Activated B cell treated with CpG ODN at 0.5 μM for 24 hours (primary cell): ENCODE measurements at regions of chr11 and their contacts with region 1.

Region 1: DNA sequence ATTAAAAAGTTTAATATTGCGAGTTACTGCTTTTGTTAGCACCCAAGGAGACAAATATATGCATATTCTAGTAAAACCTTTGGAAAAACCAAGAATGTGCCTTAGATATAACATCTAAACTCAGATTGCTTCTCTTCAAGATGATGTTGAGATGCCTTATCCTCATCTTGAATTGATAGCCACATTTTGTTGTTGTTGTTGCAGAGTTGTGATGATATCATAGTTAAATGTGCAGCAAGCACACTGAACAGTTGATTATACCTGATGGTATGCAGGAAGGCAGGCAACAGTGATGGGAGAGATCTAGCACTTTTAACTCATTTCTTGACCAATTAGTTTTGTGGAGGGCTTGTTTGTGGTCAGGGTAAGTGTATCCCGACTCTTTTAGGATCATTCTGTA is 48.0 kb downstream of the KDM2A start:
- DNase-seq: no peak
- ATAC-seq: no peak
- H3K4me3 Mint-ChIP-seq: no peak overlapping the region
- H3K27ac Mint-ChIP-seq: no peak overlapping the region
- H3K4me1 Mint-ChIP-seq: peaks cover 40% of the 10 kb centered on the region
- H3K27me3 Mint-ChIP-seq: no peaks in the 10 kb centered on the region
- CTCF ChIP-seq: no peak

Region 2: DNA sequence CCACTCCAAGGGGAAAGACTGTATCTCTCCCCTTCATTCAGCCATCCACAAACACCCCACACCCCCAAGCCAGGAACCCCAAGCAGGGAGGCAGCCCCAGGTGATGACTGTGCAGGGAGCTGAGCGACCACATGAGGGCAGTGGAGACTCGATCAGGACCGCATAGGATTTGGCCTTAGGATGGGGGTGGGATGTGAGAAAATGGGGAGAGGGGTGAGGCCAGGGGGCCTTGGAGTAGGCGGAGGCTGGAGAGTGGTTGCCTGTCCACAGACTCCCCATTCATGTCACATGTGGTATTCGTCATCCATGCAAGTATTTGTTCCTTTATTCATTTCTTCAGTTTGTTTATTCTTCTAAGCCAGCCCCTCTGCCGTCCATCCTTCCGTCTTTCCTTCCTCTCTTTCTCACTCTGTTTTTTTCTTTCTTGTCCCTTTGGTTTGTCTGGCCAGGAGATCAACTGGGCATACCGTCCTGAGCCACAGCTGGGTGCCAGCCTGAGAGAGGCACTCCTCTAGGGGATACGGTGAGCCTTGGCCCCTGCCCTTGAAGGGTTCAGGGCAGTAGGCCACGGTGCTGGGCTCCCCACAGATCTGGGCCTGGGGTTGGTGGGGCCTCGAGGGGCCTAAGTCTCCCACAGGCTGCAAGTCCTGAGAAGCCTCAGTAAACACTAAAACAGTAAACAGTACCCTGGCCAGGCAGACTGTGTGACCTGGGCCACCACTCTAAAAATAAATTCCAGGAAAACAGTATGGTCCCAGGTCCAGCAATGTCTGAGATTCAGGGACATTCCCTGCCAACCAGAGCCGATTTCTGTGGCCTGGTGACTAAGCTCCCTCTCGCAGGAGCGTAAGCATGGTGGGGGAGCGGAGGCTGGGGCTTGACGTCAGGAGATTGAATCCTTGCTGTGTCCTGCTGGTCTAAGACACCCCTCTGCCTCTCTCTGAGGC is 112.9 kb before region 1 on chr11:
- CTCF ChIA-PET with region 1: no interaction called
- POLR2A ChIA-PET with region 1: no interaction called
- intact Hi-C with region 1: loop called (anchors 1 kb)
- DNase-seq: no peak
- ATAC-seq: peak; percentile 63
- H3K4me3 Mint-ChIP-seq: no peak overlapping the region
- H3K27ac Mint-ChIP-seq: no peak overlapping the region
- H3K4me1 Mint-ChIP-seq: peaks cover 9% of the 10 kb centered on the region
- H3K27me3 Mint-ChIP-seq: peaks cover 25% of the 10 kb centered on the region
- CTCF ChIP-seq: no peak

Region 3: DNA sequence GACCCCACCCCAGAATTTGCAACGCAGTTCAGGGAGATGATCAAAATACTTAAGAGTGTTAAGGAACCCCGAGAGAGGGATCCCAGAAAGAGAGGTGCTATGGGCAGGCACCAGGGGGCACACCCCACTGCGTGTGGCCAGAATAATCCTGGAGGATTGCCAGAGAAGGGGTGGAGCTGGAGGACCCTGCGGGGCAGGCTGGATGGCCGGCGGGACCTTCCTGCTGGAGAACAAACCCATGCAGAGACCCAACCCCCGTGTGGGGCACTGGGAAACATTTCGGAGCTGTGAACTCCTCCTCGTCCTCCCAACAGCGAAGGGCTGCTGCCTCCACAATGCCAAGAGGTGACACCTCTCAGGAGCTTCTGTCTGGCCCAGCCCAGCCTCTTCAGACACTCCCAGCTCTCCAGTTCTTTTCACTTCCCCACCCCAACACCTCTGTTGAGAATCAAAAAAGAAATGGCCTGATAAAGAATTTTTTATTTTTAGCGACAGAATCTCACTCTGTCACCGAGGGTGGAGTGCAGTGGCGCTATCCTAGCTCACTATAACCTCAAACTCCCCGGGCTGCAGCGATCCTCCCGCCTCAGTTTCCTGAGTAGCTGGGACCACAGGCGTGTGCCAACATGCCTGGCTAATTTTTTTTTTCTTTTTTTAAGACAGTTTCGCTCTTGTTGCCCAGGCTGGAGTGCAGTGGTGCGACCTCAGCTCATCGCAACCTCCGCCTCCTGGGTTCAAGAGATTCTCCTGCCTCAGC is 84.9 kb before region 1 on chr11:
- CTCF ChIA-PET with region 1: interaction called, 61 read pairs
- POLR2A ChIA-PET with region 1: interaction called, 7 read pairs
- intact Hi-C with region 1: loop called (anchors 1 kb)
- DNase-seq: no peak
- ATAC-seq: no peak
- H3K4me3 Mint-ChIP-seq: peak overlapping the region; percentile 41
- H3K27ac Mint-ChIP-seq: no peak overlapping the region
- H3K4me1 Mint-ChIP-seq: peaks cover 14% of the 10 kb centered on the region
- H3K27me3 Mint-ChIP-seq: peaks cover 10% of the 10 kb centered on the region
- CTCF ChIP-seq: no peak

Region 4: DNA sequence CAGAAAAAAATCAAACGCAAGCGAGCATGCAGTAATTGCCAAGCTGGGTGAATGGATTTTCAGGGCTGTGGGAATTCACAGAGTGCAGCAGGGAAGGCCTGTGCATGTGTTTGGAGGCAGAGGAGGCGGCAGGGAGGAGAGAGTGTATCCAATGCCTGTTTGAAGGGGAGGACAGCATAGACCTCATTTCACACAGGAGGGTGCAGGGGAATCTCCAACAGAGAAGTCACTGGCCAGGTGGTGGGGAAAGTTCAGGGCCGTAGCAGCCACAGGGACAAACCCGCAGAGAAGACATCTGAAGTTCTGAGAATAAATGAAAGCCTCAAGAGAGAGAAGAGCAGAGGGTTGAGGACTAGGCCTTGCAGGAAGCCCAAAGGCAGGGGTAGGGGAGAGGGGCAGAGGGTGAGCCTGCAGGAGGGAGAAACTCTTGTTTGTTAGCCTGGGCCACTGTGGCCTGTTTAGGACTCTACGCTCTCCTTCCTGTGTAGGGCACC is 67.2 kb before region 1 on chr11:
- CTCF ChIA-PET with region 1: interaction called, 5 read pairs
- POLR2A ChIA-PET with region 1: no interaction called
- intact Hi-C with region 1: loop called (anchors 5 kb)
- DNase-seq: no peak
- ATAC-seq: peak; percentile 68
- H3K4me3 Mint-ChIP-seq: no peak overlapping the region
- H3K27ac Mint-ChIP-seq: peak overlapping the region; percentile 65
- H3K4me1 Mint-ChIP-seq: peaks cover 13% of the 10 kb centered on the region
- H3K27me3 Mint-ChIP-seq: no peaks in the 10 kb centered on the region
- CTCF ChIP-seq: no peak

Region 5: DNA sequence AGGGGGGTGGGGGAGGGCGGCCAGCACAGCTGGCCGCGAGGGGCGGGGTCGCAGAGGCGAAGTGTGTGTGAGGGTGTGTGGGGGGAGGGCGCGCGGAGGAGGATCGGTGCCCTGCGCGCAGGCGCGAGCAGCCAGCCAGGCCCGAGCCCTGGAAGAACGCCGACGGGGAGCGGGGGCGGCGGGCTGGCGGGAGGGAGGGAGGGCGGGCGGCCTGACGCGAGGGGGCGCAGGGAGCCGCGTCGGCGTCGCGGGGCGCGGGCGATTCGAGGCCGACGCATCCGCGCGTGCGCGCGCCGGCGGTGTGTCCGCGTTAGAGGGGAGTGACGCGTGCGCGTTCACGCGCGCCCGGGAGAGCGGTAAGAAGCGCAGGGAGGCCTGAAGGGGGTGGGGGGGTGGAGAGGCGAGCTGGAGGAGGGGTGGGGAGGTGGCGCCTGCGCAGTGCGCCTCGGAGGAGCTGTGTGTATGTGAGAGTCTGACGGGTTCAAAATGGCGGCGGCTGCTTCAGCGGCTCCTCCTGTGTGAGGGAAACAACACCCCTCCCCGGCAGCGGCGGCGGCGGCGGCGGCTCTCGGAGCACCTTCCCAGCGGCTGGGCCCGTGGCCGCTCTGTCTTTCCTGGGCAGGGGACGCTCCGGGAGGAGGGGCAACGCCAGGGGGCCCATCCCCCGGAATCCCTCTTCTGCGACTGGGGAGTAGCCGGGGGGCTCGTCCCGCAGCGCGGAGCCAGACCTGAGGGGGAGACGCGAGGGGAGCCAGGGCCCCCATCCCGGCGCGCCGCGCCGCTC is 48.1 kb before region 1 on chr11 and contains the start of gene KDM2A:
- CTCF ChIA-PET with region 1: interaction called, 5 read pairs
- POLR2A ChIA-PET with region 1: interaction called, 7 read pairs
- intact Hi-C with region 1: loop called (anchors 5 kb)
- DNase-seq: peak; percentile 93
- ATAC-seq: peak; percentile 76
- H3K4me3 Mint-ChIP-seq: peak within 1 kb of the TSS; percentile 91
- H3K27ac Mint-ChIP-seq: peak within 1 kb of the TSS; percentile 91
- H3K4me1 Mint-ChIP-seq: peaks cover 36% of the 10 kb centered on the region
- H3K27me3 Mint-ChIP-seq: no peaks in the 10 kb centered on the region
- CTCF ChIP-seq: no peak
- total RNA-seq, gene KDM2A: 141 and 160 TPM in 2 replicates